ENCODE measurements at regions of chr2 and their contacts with region 1.

Region 1: GRCh38 chr2:11129598-11130449 is 25.4 kb upstream of the SLC66A3 start:
- H3K4me3 ChIP-seq: peak overlapping the region; percentile 6; the same call in 1 of the 2 replicates
- H3K27ac ChIP-seq: no peak overlapping the region
- H3K4me1 ChIP-seq: 0 out of 2 replicates have a peak, but pooled peaks cover 3% of the 10 kb centered on the region
- CTCF ChIP-seq: peak; percentile 78

Region 2: DNA sequence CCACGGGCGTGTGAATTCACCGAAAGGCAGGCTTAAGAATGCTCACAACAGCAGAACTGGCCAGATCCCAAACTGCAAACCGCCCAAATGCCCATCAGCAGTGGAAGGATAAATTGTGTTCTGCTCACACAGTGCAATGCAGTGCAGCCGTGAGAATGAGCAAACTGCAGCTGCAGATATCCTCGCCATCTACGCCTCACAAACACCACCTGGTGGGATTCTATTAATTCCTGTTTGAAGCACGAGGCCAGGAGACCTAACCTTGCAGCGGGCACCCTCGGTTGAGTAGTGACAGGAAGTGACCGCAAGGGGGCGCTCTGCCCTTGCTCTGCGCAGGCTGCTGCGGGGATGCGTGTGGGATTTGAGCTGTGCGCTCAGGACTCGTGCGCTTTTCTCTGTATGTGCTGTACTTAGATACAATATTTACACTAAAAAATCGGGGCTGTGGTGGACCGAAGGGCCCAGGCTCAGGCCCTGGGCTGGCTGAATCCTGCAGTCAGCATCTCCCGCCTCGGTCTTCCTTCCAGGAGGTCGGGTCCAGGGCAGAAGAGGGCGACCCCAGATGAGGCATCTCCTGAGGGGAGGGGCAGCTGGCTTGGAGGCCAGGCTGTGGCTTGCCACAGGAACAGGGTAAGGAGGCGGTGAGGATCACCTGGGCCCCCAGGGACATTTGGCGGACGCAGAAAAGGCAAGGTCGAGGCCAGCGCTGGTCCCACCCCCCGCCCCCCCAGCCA is 297.5 kb before region 1 on chr2:
- CTCF ChIA-PET with region 1: interaction called, 185 read pairs
- POLR2A ChIA-PET with region 1: no interaction called
- H3K4me3 ChIP-seq: no peak overlapping the region
- H3K27ac ChIP-seq: no peak overlapping the region
- H3K4me1 ChIP-seq: peaks cover 2% of the 10 kb centered on the region; the same call in 1 of the 2 replicates
- CTCF ChIP-seq: peak; percentile 95

Region 3: DNA sequence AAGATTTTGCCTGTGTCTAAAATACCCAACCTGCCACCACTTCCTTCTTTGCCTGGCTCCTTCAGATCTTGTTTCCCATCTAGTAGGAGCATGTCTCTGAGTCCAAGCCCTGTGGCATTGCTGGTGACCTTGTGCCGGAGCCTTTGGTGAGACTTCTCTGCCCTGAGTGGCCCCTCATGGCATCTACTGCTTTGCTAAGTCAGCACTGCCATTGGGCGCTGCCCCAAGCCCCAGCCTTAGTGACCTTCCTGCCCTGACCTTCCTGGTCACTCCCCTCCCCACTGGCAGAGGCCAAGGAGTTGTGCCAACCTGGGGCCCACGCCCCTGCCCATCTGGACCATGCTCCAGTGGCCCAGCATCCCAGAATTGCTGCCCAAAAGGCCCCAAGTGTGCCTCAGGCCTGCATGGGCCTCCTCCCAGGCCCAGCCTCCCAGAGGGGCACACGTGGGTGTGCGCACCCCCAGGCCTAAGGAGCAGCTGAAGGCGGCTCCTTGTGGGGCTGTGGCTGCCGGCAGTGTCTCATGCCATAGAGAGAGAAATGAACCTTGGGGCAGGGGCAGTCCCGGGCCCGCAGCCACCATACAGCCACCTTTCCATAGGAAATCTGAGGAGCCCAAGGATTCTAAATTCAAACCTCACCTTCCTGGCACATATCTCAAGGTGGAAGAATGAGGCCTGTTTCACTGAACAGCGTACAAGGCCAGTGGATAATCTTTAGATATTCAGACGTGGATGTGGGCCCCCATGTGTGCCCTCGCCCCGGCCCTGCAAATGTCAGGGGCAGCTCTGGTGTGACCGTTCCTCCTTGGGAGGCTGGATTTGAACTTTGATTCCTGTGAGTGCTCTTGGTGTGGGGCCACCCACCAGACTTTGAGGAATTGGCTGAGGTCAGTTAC is 74.8 kb before region 1 on chr2:
- CTCF ChIA-PET with region 1: no interaction called
- POLR2A ChIA-PET with region 1: no interaction called
- H3K4me3 ChIP-seq: no peak overlapping the region
- H3K27ac ChIP-seq: no peak overlapping the region
- H3K4me1 ChIP-seq: no peaks in the 10 kb centered on the region
- CTCF ChIP-seq: no peak

Region 4: GRCh38 chr2:11154016-11154922 is 24.4 kb after region 1 on chr2:
- CTCF ChIA-PET with region 1: interaction called, 15 read pairs
- POLR2A ChIA-PET with region 1: interaction called, 5 read pairs
- H3K4me3 ChIP-seq: peak overlapping the region; percentile 35
- H3K27ac ChIP-seq: peak overlapping the region; percentile 49; the same call in 1 of the 2 replicates
- H3K4me1 ChIP-seq: no peaks in the 10 kb centered on the region
- CTCF ChIP-seq: no peak

Region 5: GRCh38 chr2:11215407-11215806 is 85.6 kb after region 1 on chr2:
- CTCF ChIA-PET with region 1: interaction called, 12 read pairs
- POLR2A ChIA-PET with region 1: no interaction called
- H3K4me3 ChIP-seq: no peak overlapping the region
- H3K27ac ChIP-seq: no peak overlapping the region
- H3K4me1 ChIP-seq: no peaks in the 10 kb centered on the region
- CTCF ChIP-seq: no peak

Region 6: GRCh38 chr2:11357428-11357972 is 227.7 kb after region 1 on chr2:
- CTCF ChIA-PET with region 1: no interaction called
- POLR2A ChIA-PET with region 1: no interaction called
- H3K4me3 ChIP-seq: no peak overlapping the region
- H3K27ac ChIP-seq: no peak overlapping the region
- H3K4me1 ChIP-seq: no peaks in the 10 kb centered on the region
- CTCF ChIP-seq: no peak

Region 7: GRCh38 chr2:11417946-11418585 is 288.2 kb after region 1 on chr2:
- CTCF ChIA-PET with region 1: interaction called, 97 read pairs
- POLR2A ChIA-PET with region 1: interaction called, 5 read pairs
- H3K4me3 ChIP-seq: no peak overlapping the region
- H3K27ac ChIP-seq: no peak overlapping the region
- H3K4me1 ChIP-seq: no peaks in the 10 kb centered on the region
- CTCF ChIP-seq: no peak

Region 8: DNA sequence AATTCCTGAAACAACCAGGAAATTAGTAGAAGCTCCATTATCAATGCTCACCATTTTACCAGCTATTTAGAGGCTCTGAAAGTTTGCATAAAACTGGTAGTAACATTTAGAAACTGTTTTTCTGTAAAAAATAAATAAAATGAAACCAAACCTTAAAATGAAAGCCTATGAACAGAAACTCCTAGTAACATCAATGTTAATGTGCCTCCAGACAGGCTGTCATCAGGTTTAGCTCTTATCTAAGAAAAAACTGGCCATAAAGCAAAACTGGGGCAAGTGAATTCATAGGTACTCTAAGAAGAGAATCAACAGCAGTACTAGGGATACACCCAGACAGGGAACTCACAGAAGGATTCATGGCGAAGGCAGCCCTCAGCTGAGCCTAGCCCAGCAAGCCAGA is 328.1 kb after region 1 on chr2:
- CTCF ChIA-PET with region 1: interaction called, 10 read pairs
- POLR2A ChIA-PET with region 1: no interaction called
- H3K4me3 ChIP-seq: no peak overlapping the region
- H3K27ac ChIP-seq: no peak overlapping the region
- H3K4me1 ChIP-seq: no peaks in the 10 kb centered on the region
- CTCF ChIP-seq: no peak

Region 9: DNA sequence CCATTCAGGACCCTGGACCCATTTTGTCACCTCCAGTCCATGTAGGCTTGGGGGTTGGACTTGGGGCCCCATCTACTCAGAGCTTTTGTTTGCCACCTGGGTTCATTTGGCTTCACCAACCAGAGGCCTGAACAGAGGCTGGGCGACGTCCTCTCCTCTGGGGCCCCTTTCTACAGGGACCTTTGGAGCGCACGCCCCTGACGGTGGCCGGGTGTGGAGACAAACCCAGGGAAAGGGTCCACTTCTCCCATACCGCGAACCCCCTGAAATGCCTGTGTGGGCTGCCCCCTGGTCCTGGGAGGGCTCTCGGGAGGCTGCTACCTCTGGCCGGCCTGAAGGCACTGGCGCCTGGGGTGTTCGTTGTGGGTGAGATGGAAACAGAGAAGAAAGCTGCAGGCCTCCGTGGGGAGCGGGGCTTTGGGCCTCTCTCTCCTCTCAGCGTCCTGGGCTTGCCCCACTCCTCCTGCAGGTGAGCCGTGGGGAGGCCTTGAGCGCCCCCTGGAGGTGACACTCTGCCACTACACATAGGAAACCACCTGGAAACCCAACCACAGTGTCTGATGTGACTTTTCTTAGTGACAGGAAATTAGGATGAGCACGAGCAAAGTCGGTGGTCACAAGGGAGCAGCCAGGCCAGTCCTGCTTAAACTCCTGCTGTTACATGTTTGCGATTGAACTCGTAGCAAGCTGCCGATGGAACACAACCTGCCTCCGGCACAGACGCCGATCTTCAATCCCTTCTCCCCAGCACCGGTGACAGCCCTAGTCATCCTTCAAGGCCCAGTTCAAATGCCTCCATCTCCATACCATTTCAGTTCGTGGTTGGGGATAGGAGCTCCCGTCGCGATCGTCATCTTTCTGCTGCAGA is 552.1 kb after region 1 on chr2:
- CTCF ChIA-PET with region 1: interaction called, 21 read pairs
- POLR2A ChIA-PET with region 1: no interaction called
- H3K4me3 ChIP-seq: no peak overlapping the region
- H3K27ac ChIP-seq: peak overlapping the region; percentile 16; the same call in 1 of the 2 replicates
- H3K4me1 ChIP-seq: no peaks in the 10 kb centered on the region
- CTCF ChIP-seq: peak; percentile 88